Heart left ventricle (tissue), 16 donors: ENCODE measurements at regions of chr10 and their contacts with region 1.

Region 1: GRCh38 chr10:61750929-61751471 is 88.3 kb downstream of the CABCOCO1 start:
- DNase-seq: peak; percentile 43 to 65 (median 48)
- ATAC-seq: peak in 3 of 4 donors; percentile 81 to 85 (median 81)
- H3K4me3 ChIP-seq: no peak overlapping the region
- H3K27ac ChIP-seq: no peak overlapping the region
- H3K4me1 ChIP-seq: peaks cover 0 to 18% (median 0%) of the 10 kb centered on the region in 12 donors
- H3K27me3 ChIP-seq: no peaks in the 10 kb centered on the region
- CTCF ChIP-seq: peak; percentile 41 to 73 (median 62)
- POLR2A ChIP-seq: no peak

Region 2: GRCh38 chr10:61492364-61492995 is 258.5 kb before region 1 on chr10:
- intact Hi-C with region 1: no loop called
- DNase-seq: no peak
- ATAC-seq: no peak
- H3K4me3 ChIP-seq: no peak overlapping the region
- H3K27ac ChIP-seq: no peak overlapping the region
- H3K4me1 ChIP-seq: no peaks in the 10 kb centered on the region
- H3K27me3 ChIP-seq: no peaks in the 10 kb centered on the region
- CTCF ChIP-seq: no peak
- POLR2A ChIP-seq: no peak

Region 3: GRCh38 chr10:61835069-61835945 is 84.3 kb after region 1 on chr10:
- intact Hi-C with region 1: loop called in 2 of 10 experiments (anchors 10 kb)
- DNase-seq: no peak
- ATAC-seq: peak in 2 of 4 donors; percentile 34 to 71
- H3K4me3 ChIP-seq: no peak overlapping the region
- H3K27ac ChIP-seq: peak overlapping the region in 8 of 12 donors; percentile 12 to 48 (median 25)
- H3K4me1 ChIP-seq: peaks cover 0 to 28% (median 8%) of the 10 kb centered on the region in 12 donors
- H3K27me3 ChIP-seq: no peaks in the 10 kb centered on the region
- CTCF ChIP-seq: peak in 8 of 12 donors; percentile 26 to 48 (median 34)
- POLR2A ChIP-seq: no peak

Region 4: GRCh38 chr10:61869774-61870525 is 119.0 kb after region 1 on chr10:
- intact Hi-C with region 1: loop called in 1 of 10 experiments (anchors 10 kb)
- DNase-seq: no peak
- ATAC-seq: no peak
- H3K4me3 ChIP-seq: peak overlapping the region in 2 of 12 donors; percentile 9 to 16
- H3K27ac ChIP-seq: peak overlapping the region in 2 of 12 donors; percentile 15 to 38
- H3K4me1 ChIP-seq: peaks cover 0 to 16% (median 5%) of the 10 kb centered on the region in 12 donors
- H3K27me3 ChIP-seq: no peaks in the 10 kb centered on the region
- CTCF ChIP-seq: no peak
- POLR2A ChIP-seq: no peak

Region 5: GRCh38 chr10:62244780-62245467 is 493.9 kb after region 1 on chr10:
- intact Hi-C with region 1: loop called in 2 of 10 experiments (anchors 5 to 10 kb)
- DNase-seq: peak in 2 of 5 donors; percentile 56 to 57
- ATAC-seq: peak in 3 of 4 donors; percentile 80 to 88 (median 85)
- H3K4me3 ChIP-seq: peak overlapping the region in 3 of 12 donors; percentile 14 to 48 (median 31)
- H3K27ac ChIP-seq: peak overlapping the region in 2 of 12 donors; percentile 7 to 85
- H3K4me1 ChIP-seq: peaks cover 0 to 38% (median 6%) of the 10 kb centered on the region in 12 donors
- H3K27me3 ChIP-seq: no peaks in the 10 kb centered on the region
- CTCF ChIP-seq: peak; percentile 80 to 96 (median 88)
- POLR2A ChIP-seq: no peak